Activated CD4-positive, alpha-beta memory T cell treated with anti-CD3 and anti-CD28 coated beads for 36 hours (primary cell): ENCODE measurements at regions of chr16 and their contacts with region 1.

Region 1: DNA sequence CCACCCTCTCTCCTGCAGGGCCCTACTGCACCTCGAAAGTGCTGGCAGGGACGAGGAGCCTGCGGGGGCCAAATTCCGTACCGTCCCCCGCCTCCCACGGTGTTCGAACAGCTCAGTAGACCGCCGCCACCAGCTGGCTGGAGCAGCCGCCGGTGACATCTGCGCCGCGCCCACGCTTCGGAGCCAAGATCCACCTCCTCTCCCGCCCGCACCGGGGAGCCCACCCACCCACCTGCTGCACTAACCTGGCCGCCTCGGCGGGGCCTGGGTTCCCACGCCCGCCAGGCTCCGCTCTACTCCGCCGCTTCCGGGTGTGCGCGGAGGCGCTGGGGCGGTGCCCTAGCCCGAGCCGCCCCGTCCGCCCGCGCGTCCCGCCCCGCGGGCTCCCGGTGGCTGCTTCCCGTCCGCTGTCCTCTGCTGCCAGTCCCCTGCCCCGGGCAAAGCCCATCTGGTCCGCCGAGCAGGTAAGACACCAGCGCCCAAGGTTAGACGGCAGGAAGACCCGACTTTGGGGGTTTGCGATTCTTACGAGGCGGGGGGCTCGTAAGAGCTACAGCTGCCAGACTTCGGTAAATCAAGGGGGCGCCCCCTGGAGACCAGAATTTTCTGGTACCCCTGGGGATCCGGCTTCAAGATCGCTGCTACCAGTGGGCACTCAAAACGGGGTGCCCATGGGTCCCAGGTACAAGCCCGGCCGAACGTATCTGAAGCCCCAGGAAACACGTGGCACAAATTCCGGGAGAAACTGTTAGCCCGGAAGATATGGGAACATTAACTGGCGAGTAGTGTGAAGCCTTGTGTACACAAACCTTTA is at the starts of genes FBXL8 and TRADD:
- DNase-seq: peak; percentile 86
- H3K4me3 Mint-ChIP-seq: peak within 1 kb of the TSS; percentile 93
- H3K27ac Mint-ChIP-seq: peak within 1 kb of the TSS; percentile 95
- H3K4me1 Mint-ChIP-seq: peaks cover 57% of the 10 kb centered on the region
- H3K27me3 Mint-ChIP-seq: peaks cover 13% of the 10 kb centered on the region
- total RNA-seq, gene FBXL8: 24.1 to 25.7 TPM
- total RNA-seq, gene TRADD: 41.7 to 43.2 TPM

Region 2: DNA sequence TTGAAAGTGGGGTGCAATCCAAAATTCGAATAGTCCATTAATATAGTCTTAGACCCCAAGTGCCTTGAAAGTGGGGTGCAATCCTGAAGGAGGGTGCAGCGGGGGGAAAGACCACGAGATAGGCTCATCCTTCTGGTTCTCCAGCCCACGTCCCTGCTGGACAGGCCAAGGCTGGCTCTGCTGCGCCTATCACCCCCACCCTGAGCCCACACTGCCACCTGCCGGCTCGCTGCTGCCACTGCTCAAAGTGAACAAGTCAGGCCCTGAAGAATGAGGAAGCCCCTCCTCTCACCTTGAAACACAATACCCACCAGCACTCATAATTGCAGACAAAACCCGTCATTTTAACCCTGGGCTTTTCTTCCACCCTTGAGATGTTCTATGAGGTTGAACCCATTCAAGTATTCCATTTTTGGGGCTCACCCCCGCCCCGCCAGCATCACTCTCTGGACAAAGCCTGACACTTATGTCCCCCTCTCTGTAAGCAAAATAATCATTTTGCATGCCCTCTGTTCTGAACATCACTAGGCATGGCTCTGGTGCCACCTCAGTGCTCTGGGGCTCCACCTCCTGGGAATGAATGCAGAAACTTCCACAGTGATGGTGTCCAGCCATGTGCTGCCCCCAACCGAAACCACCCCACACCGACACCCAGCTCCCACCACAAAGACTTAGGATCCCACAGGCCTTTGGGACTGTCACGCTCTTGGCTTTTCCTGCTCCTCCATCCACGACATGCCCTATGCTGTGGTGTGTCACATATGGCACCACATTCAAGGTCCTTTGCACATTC is 675.9 kb before region 1 on chr16:
- CTCF ChIA-PET with region 1: no interaction called
- POLR2A ChIA-PET with region 1: no interaction called
- intact Hi-C with region 1: no loop called
- DNase-seq: peak; percentile 85
- H3K4me3 Mint-ChIP-seq: no peak overlapping the region
- H3K27ac Mint-ChIP-seq: peak overlapping the region; percentile 79
- H3K4me1 Mint-ChIP-seq: peaks cover 19% of the 10 kb centered on the region
- H3K27me3 Mint-ChIP-seq: no peaks in the 10 kb centered on the region

Region 3: GRCh38 chr16:66954097-66954659 is 205.6 kb before region 1 on chr16:
- CTCF ChIA-PET with region 1: interaction called, 50 read pairs
- POLR2A ChIA-PET with region 1: no interaction called
- intact Hi-C with region 1: no loop called
- DNase-seq: peak; percentile 88
- H3K4me3 Mint-ChIP-seq: no peak overlapping the region
- H3K27ac Mint-ChIP-seq: peak overlapping the region; percentile 9
- H3K4me1 Mint-ChIP-seq: peaks cover 15% of the 10 kb centered on the region
- H3K27me3 Mint-ChIP-seq: peaks cover 31% of the 10 kb centered on the region

Region 4: GRCh38 chr16:66984892-66985311 is 174.9 kb before region 1 on chr16:
- CTCF ChIA-PET with region 1: interaction called, 45 read pairs
- POLR2A ChIA-PET with region 1: interaction called, 10 read pairs
- intact Hi-C with region 1: loop called (anchors 1 kb)
- DNase-seq: peak; percentile 91
- H3K4me3 Mint-ChIP-seq: peak overlapping the region; percentile 55
- H3K27ac Mint-ChIP-seq: peak overlapping the region; percentile 100
- H3K4me1 Mint-ChIP-seq: peaks cover 63% of the 10 kb centered on the region
- H3K27me3 Mint-ChIP-seq: no peaks in the 10 kb centered on the region

Region 5: DNA sequence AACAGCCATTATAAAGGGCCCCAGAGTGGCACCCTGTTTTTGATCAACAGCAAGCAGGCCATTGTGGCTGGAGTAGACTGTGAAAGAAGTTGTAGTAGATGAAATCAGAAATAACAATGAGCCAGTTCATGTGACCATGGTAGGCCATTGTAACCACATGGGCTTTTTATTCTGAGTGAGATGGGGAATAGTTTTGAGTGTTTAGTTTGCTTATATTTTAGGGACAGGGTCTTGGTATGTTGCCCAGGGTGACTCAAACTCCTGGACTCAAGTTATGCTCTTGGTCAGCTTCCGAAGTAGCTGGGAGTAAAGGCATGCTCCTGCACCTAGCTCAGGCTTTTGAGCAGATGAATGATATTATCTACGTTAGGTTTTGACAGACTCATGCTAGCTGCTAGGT is 118.9 kb before region 1 on chr16:
- CTCF ChIA-PET with region 1: interaction called, 16 read pairs
- POLR2A ChIA-PET with region 1: no interaction called
- intact Hi-C with region 1: no loop called
- DNase-seq: no peak
- H3K4me3 Mint-ChIP-seq: no peak overlapping the region
- H3K27ac Mint-ChIP-seq: peak overlapping the region; percentile 5
- H3K4me1 Mint-ChIP-seq: peaks cover 43% of the 10 kb centered on the region
- H3K27me3 Mint-ChIP-seq: no peaks in the 10 kb centered on the region

Region 6: GRCh38 chr16:67137605-67138004 is 22.2 kb before region 1 on chr16:
- CTCF ChIA-PET with region 1: interaction called, 19 read pairs
- POLR2A ChIA-PET with region 1: no interaction called
- intact Hi-C with region 1: no loop called
- DNase-seq: no peak
- H3K4me3 Mint-ChIP-seq: no peak overlapping the region
- H3K27ac Mint-ChIP-seq: no peak overlapping the region
- H3K4me1 Mint-ChIP-seq: no peaks in the 10 kb centered on the region
- H3K27me3 Mint-ChIP-seq: no peaks in the 10 kb centered on the region

Region 7: DNA sequence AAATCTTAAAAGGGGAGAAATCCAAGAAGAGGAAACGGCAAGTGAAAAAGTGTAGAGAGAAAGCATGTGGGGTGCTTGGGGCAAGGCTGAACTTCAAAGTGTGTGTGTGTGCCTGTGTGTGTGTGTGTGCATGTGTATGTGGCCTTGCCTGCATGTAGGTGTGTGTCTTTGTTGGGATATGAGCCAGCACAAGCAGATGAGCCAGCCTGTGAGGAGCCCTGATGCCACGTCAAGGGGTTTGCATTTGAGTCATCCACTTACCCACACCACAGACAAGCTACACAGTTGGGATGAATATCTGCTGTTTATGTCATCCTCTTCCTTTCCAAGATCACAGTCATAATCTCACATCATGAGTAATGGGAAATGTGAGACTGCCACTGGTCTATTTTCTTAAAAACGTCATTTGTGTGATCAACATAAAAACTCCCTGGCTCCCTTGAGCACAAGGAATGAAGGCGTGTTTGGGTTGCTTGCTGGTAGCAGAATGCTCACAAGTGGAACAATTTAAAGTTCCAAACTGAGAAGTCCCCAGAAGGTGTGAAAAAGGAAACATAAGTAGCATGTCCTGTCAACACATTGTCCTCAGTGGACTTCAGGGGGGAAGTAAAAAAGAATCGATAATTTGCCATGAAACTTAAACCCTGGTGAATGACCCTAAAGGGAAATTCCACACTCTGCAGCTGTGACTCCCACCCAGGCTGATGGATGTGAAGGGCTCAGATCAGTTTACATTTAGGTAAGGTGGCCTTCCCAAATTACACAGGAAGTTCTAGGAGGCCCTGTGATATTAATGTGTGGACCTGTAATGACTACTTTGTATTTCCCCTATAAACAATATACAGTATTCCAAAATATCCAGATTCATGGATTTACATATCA is 152.0 kb after region 1 on chr16:
- CTCF ChIA-PET with region 1: no interaction called
- POLR2A ChIA-PET with region 1: no interaction called
- intact Hi-C with region 1: loop called (anchors 1 kb)
- DNase-seq: peak; percentile 95
- H3K4me3 Mint-ChIP-seq: peak overlapping the region; percentile 20
- H3K27ac Mint-ChIP-seq: peak overlapping the region; percentile 95
- H3K4me1 Mint-ChIP-seq: peaks cover 41% of the 10 kb centered on the region
- H3K27me3 Mint-ChIP-seq: no peaks in the 10 kb centered on the region